ENCODE measurements at regions of chr9 and their contacts with region 1.

Region 1: GRCh38 chr9:118522093-118523028 is 818.2 kb downstream of the TLR4 start:
- DNase-seq: peak; percentile 34
- ATAC-seq: peak; percentile 100
- H3K4me3 ChIP-seq: no peak overlapping the region
- H3K27ac ChIP-seq: no peak overlapping the region
- H3K4me1 ChIP-seq: no peaks in the 10 kb centered on the region
- H3K27me3 ChIP-seq: no peaks in the 10 kb centered on the region
- CTCF ChIP-seq: peak; percentile 63 to 84 (median 71)
- EP300 ChIP-seq: no peak
- POLR2A ChIP-seq: no peak
- RAD21 ChIP-seq: peak; percentile 73

Region 2: GRCh38 chr9:118751848-118752223 is 229.5 kb after region 1 on chr9:
- CTCF ChIA-PET with region 1: no interaction called
- POLR2A ChIA-PET with region 1: no interaction called
- RAD21 ChIA-PET with region 1: no interaction called
- SMC1A ChIA-PET with region 1: no interaction called
- in situ Hi-C with region 1: no loop called
- intact Hi-C with region 1: loop called (anchors 5 kb)
- DNase-seq: no peak
- ATAC-seq: no peak
- H3K4me3 ChIP-seq: no peak overlapping the region
- H3K27ac ChIP-seq: no peak overlapping the region
- H3K4me1 ChIP-seq: no peaks in the 10 kb centered on the region
- H3K27me3 ChIP-seq: no peaks in the 10 kb centered on the region
- CTCF ChIP-seq: no peak
- EP300 ChIP-seq: no peak
- POLR2A ChIP-seq: no peak
- RAD21 ChIP-seq: no peak

Region 3: DNA sequence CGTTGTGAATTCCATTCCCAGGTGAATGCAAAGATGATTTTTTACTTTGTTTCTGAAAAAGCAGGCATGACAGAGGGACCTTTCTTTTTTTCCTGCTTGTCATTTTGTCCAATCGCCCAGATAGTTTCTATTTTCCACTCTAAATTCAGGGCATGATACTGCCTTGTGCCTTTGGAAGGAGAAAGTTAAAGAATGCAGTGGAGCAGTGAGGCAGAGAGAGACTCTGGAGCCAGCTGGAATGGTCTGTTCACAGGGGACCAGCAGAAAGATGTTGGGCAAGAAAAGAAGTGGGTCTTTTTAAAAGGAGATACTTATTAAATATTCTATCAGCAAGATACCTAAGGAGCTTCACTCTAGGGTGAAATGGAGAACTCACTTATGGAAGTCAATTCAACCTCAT is 314.5 kb after region 1 on chr9:
- CTCF ChIA-PET with region 1: no interaction called
- POLR2A ChIA-PET with region 1: no interaction called
- RAD21 ChIA-PET with region 1: no interaction called
- SMC1A ChIA-PET with region 1: no interaction called
- in situ Hi-C with region 1: no loop called
- intact Hi-C with region 1: no loop called
- DNase-seq: no peak
- ATAC-seq: no peak
- H3K4me3 ChIP-seq: no peak overlapping the region
- H3K27ac ChIP-seq: no peak overlapping the region
- H3K4me1 ChIP-seq: no peaks in the 10 kb centered on the region
- H3K27me3 ChIP-seq: no peaks in the 10 kb centered on the region
- CTCF ChIP-seq: no peak
- EP300 ChIP-seq: no peak
- POLR2A ChIP-seq: no peak
- RAD21 ChIP-seq: no peak

Region 4: GRCh38 chr9:118975736-118976135 is 453.4 kb after region 1 on chr9:
- CTCF ChIA-PET with region 1: no interaction called
- POLR2A ChIA-PET with region 1: no interaction called
- RAD21 ChIA-PET with region 1: no interaction called
- SMC1A ChIA-PET with region 1: no interaction called
- in situ Hi-C with region 1: no loop called
- intact Hi-C with region 1: loop called (anchors 5 kb)
- DNase-seq: no peak
- ATAC-seq: no peak
- H3K4me3 ChIP-seq: no peak overlapping the region
- H3K27ac ChIP-seq: no peak overlapping the region
- H3K4me1 ChIP-seq: no peaks in the 10 kb centered on the region
- H3K27me3 ChIP-seq: no peaks in the 10 kb centered on the region
- CTCF ChIP-seq: no peak
- EP300 ChIP-seq: no peak
- POLR2A ChIP-seq: no peak
- RAD21 ChIP-seq: no peak

Region 5: GRCh38 chr9:119224431-119224830 is 702.1 kb after region 1 on chr9:
- CTCF ChIA-PET with region 1: no interaction called
- POLR2A ChIA-PET with region 1: no interaction called
- RAD21 ChIA-PET with region 1: no interaction called
- SMC1A ChIA-PET with region 1: no interaction called
- in situ Hi-C with region 1: no loop called
- intact Hi-C with region 1: no loop called
- DNase-seq: no peak
- ATAC-seq: no peak
- H3K4me3 ChIP-seq: no peak overlapping the region
- H3K27ac ChIP-seq: no peak overlapping the region
- H3K4me1 ChIP-seq: no peaks in the 10 kb centered on the region
- H3K27me3 ChIP-seq: no peaks in the 10 kb centered on the region
- CTCF ChIP-seq: no peak
- EP300 ChIP-seq: no peak
- POLR2A ChIP-seq: no peak
- RAD21 ChIP-seq: no peak

Region 6: DNA sequence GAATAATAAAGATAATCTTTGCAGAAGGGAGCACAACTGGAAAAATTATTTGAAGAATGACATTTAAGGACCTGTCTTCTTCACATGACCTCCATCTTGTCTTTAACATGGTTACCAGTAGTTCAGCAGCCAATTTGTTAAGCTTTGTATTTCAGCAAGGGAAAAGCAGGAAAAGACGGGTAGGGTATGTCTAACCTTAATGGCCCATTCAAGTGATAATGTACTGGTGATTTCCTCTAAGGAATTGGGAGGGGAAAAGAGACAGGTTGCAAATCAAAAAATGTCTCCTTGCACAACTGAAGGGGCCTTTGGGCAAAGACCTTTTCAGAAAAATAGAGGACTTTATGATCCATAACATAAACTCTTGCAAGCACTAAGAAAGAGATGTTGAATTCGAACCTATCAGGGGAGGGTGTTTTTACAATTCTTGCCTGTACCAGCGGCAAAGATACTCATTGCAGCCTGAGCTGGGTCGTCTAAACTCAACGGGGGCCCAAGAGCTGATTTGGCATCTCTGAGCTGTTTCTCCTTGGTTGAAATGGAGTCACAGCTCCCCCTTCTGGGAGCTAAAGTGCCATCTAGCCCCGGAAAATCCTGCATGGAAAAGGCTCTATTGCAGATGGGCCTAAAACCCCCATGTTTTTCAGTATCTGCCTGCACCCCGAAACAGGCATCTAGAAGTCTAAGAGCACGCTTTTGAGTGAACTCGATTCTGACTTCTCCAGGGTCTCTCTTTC is 843.1 kb after region 1 on chr9:
- CTCF ChIA-PET with region 1: interaction called, 4 read pairs
- POLR2A ChIA-PET with region 1: no interaction called
- RAD21 ChIA-PET with region 1: no interaction called
- SMC1A ChIA-PET with region 1: no interaction called
- in situ Hi-C with region 1: no loop called
- intact Hi-C with region 1: loop called (anchors 1 kb)
- DNase-seq: no peak
- ATAC-seq: 0 out of 3 replicates have a peak, but pooled peaks have one; percentile 31
- H3K4me3 ChIP-seq: no peak overlapping the region
- H3K27ac ChIP-seq: no peak overlapping the region
- H3K4me1 ChIP-seq: no peaks in the 10 kb centered on the region
- H3K27me3 ChIP-seq: peaks cover 0 to 1% of the 10 kb centered on the region in 2 experiments; a peak in 2 of 4 replicates
- CTCF ChIP-seq: peak; percentile 37 to 49 (median 39); a peak in 4 of 6 replicates
- EP300 ChIP-seq: no peak
- POLR2A ChIP-seq: no peak
- RAD21 ChIP-seq: peak; percentile 60

Measured in GM12878 (cell line).